Esophagus muscularis mucosa (tissue), 4 donors: ENCODE measurements at regions of chr15 and their contacts with region 1.

Region 1: GRCh38 chr15:81274931-81275707 is 48.8 kb downstream of the STARD5 start:
- DNase-seq: no peak
- H3K4me3 ChIP-seq: no peak overlapping the region
- H3K27ac ChIP-seq: peak overlapping the region; percentile 3 to 23 (median 7)
- H3K4me1 ChIP-seq: peaks cover 3 to 30% (median 23%) of the 10 kb centered on the region in 4 donors
- H3K27me3 ChIP-seq: no peaks in the 10 kb centered on the region
- CTCF ChIP-seq: peak; percentile 80 to 89 (median 83)
- EP300 ChIP-seq: no peak
- POLR2A ChIP-seq: no peak

Region 2: GRCh38 chr15:81336568-81336967 is 61.4 kb after region 1 on chr15:
- intact Hi-C with region 1: loop called (anchors 10 kb)
- DNase-seq: no peak
- H3K4me3 ChIP-seq: no peak overlapping the region
- H3K27ac ChIP-seq: no peak overlapping the region
- H3K4me1 ChIP-seq: peaks cover 4 to 28% (median 27%) of the 10 kb centered on the region in 4 donors
- H3K27me3 ChIP-seq: no peaks in the 10 kb centered on the region
- CTCF ChIP-seq: peak in 1 of 3 experiments; percentile 13
- EP300 ChIP-seq: no peak
- POLR2A ChIP-seq: no peak

Region 3: GRCh38 chr15:81400640-81401236 is 125.6 kb after region 1 on chr15:
- intact Hi-C with region 1: loop called (anchors 1 kb)
- DNase-seq: no peak
- H3K4me3 ChIP-seq: no peak overlapping the region
- H3K27ac ChIP-seq: no peak overlapping the region
- H3K4me1 ChIP-seq: no peaks in the 10 kb centered on the region
- H3K27me3 ChIP-seq: peaks cover 0 to 16% (median 0%) of the 10 kb centered on the region in 4 donors
- CTCF ChIP-seq: peak; percentile 69 to 82 (median 76)
- EP300 ChIP-seq: no peak
- POLR2A ChIP-seq: no peak

Region 4: DNA sequence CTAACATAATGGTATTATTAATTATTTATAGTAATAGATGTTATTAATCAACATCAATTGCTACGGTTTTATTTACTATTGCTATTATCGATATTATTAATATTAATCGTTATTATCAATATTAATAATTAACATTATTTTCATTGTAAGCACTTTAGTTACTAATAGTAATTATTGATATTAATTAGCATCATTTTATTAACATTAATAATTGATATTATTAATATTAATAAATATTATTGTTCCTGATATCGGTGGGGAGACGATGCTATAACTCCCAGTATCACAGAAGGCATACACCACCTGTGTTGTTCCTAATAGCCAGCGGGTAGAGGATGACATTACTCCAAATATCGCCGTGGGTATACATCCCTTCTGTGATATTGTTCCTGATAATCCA is 435.2 kb after region 1 on chr15:
- intact Hi-C with region 1: no loop called
- DNase-seq: no peak
- H3K4me3 ChIP-seq: no peak overlapping the region
- H3K27ac ChIP-seq: no peak overlapping the region
- H3K4me1 ChIP-seq: peaks cover 0 to 8% (median 3%) of the 10 kb centered on the region in 4 donors
- H3K27me3 ChIP-seq: no peaks in the 10 kb centered on the region
- CTCF ChIP-seq: no peak
- EP300 ChIP-seq: no peak
- POLR2A ChIP-seq: no peak